ENCODE measurements at regions of chr11 and their contacts with region 1.

Region 1: DNA sequence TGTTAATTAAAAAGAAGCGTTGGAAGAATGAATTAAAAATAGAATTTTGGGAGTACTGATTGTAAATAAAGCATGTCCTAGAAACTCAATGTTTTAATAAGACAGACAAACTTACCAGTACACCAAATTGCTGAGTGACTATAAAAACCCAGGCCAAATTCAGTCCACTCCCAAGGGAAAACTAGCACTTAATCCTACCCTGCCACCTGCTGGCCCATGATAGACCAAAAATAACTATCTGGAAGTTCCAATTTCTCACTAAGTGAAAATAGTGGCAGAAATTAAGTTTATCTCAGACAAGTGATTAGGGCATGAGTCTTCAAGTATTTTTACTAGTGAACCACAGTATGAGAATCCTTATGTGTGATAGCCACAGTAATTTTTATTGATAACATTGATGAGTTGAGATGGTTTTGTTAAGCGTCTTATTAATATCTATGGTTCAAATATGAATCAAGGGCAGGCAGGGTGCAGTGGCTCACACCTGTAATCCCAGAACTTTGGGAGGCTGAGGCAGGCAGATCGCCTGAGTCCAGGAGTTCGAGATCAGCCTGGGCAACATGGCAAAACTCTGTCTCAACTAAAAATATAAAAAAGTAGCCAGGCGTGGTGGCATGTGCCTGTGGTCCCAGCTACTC is 9.8 kb upstream of the DDX10 start:
- DNase-seq: no peak
- ATAC-seq: peak; percentile 79

Region 2: DNA sequence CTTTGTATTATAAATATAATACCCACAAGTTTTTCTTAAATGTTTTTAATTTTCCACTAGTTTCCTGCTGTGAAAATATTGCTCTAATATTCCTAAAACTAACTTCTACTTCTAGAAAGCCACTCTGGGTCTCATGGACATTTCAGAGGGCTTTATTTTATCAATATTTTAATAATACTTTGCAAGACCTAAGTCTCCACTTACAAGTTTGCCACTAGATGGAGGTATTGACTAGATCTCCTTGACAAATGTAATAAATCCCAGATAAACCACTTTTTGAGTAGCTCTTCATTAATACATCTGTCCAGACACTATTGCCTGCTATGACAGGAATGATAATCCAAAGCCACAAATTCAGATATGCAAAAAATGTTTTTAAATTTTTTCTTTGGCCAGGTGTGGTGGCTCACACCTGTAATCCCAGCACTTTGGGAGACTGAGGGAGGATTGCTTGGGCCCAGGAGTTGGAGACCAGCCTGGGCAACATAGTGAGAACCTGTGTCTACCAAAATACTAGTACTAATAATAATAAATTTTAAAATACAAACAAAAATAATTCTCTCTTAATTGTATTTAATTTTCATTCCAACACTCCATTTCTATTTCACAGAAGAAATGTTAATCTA is 537.3 kb before region 1 on chr11:
- intact Hi-C with region 1: loop called (anchors 5 kb)
- DNase-seq: no peak
- ATAC-seq: no peak

Region 3: DNA sequence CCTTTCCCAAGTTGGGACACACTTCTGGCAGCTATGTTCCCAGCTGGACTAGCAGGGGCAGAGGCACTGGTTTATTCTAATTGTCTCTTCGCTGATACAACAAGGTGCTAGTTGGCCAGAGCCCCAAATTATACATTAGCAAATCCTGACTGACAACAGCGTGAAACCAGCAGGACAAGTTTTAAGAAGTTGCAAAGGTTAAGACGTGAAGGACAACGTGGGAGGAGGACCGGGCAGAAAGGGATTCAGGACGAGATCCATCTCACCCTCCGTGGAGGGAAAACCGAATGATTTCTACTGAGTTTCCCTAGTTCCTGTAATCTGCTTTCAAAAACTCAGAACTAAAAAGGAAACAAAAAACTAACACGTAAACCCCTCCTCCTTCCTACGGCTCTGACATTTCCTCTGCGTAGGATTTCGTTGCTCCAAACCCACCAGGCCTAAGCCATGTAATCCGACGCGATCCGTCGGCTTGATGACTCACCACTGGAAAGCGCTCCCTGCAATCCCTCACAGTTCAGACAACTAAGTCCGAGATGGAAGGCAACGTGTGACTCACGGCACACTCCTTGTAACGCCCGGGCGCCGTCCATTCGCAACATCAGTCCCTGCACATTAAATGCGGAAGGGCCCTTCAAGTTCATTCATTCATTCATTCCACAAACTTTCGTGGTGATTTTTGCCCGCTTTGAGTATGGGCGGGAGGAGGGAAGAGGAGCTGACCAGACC is 157.6 kb before region 1 on chr11:
- intact Hi-C with region 1: loop called (anchors 10 kb)
- DNase-seq: peak; percentile 89
- ATAC-seq: peak; percentile 95

Region 4: DNA sequence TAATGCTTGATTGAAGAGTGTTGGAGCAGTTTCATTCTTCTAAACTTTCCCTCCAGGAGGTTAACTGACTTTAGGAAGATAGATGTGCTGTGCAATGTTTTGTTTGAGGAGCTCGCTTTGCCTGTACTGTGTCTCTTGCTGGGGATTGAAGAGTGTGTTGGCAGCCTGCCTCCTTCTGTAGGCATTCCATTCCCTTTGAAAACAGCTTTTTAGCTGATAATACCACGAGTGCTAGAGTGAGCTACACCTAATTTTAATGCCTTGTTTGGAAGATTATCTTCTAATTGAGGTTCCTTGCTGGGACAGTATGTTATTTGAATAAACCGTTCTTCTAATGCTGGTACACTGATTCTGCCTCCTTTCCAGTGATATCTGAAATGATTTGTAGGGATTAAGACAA is 17.0 kb after region 1 on chr11:
- intact Hi-C with region 1: no loop called
- DNase-seq: no peak
- ATAC-seq: peak; percentile 58